ENCODE measurements at regions of chr14 and their contacts with region 1.

Region 1: GRCh38 chr14:55270832-55271565 is at the start of gene FBXO34:
- DNase-seq: peak; percentile 100
- H3K4me3 Mint-ChIP-seq: peak within 1 kb of the TSS; percentile 92
- H3K27ac Mint-ChIP-seq: peak within 1 kb of the TSS; percentile 90
- H3K4me1 Mint-ChIP-seq: peaks cover 40% of the 10 kb centered on the region
- H3K27me3 Mint-ChIP-seq: no peaks in the 10 kb centered on the region
- total RNA-seq, gene FBXO34: 25.1 to 25.5 TPM

Region 2: GRCh38 chr14:55043528-55043927 is 227.5 kb before region 1 on chr14:
- CTCF ChIA-PET with region 1: no interaction called
- POLR2A ChIA-PET with region 1: no interaction called
- DNase-seq: no peak
- H3K4me3 Mint-ChIP-seq: no peak overlapping the region
- H3K27ac Mint-ChIP-seq: no peak overlapping the region
- H3K4me1 Mint-ChIP-seq: no peaks in the 10 kb centered on the region
- H3K27me3 Mint-ChIP-seq: no peaks in the 10 kb centered on the region

Region 3: DNA sequence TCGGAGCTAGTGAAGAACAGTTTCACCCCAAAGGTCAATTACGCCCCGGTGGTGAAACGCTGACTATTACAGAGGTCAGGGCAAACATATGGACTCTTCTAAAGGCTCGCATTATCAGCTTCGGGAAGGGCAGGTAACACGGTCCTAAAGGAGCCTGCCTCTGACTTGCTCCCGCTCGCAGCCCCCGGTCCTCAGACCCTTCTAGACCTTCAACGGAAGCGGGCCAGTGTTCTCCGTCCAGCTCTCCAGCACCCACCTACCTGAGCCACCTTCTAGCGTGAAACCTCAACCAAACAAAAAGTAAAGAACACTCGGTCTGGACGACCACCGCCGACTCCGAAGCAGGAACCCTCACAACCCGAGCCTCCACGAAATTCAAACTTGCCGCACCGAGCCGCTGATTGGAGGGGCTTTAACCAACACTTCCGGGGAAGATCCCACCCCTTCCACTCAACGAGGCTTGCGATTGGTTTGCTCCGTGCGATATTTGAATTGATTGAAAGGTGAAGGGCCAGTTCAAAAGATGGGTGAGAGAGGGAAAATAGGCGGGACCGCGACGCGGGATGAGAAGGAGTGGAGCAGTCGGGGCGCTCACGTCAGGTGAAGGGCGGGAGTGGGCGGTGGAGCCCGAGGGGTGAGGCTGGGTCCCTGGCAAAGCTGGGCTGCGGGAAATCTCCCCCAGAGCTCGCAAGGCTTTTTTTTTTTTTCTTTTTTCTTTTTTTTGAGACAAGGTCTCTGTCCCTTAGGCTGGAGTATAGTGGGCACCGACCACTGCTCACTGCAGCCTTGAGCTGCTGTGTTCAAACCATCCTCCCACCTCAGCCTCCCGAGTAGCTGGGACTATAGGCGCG is 79.6 kb before region 1 on chr14 and contains the start of gene DLGAP5:
- CTCF ChIA-PET with region 1: interaction called, 13 read pairs
- POLR2A ChIA-PET with region 1: interaction called, 4 read pairs
- DNase-seq: peak; percentile 95
- H3K4me3 Mint-ChIP-seq: peak within 1 kb of the TSS; percentile 77
- H3K27ac Mint-ChIP-seq: peak within 1 kb of the TSS; percentile 83
- H3K4me1 Mint-ChIP-seq: peaks cover 39% of the 10 kb centered on the region
- H3K27me3 Mint-ChIP-seq: peaks cover 4% of the 10 kb centered on the region
- total RNA-seq, gene DLGAP5: 89.7 to 95.8 TPM

Region 4: GRCh38 chr14:55281316-55281839 is 10.4 kb after region 1 on chr14:
- CTCF ChIA-PET with region 1: interaction called, 10 read pairs
- POLR2A ChIA-PET with region 1: interaction called, 4 read pairs
- DNase-seq: no peak
- H3K4me3 Mint-ChIP-seq: no peak overlapping the region
- H3K27ac Mint-ChIP-seq: no peak overlapping the region
- H3K4me1 Mint-ChIP-seq: peaks cover 34% of the 10 kb centered on the region
- H3K27me3 Mint-ChIP-seq: no peaks in the 10 kb centered on the region

Region 5: GRCh38 chr14:55333711-55334485 is 62.9 kb after region 1 on chr14:
- CTCF ChIA-PET with region 1: interaction called, 35 read pairs
- POLR2A ChIA-PET with region 1: interaction called, 16 read pairs
- DNase-seq: no peak
- H3K4me3 Mint-ChIP-seq: peak overlapping the region; percentile 76
- H3K27ac Mint-ChIP-seq: peak overlapping the region; percentile 88
- H3K4me1 Mint-ChIP-seq: peaks cover 81% of the 10 kb centered on the region
- H3K27me3 Mint-ChIP-seq: no peaks in the 10 kb centered on the region

Region 6: DNA sequence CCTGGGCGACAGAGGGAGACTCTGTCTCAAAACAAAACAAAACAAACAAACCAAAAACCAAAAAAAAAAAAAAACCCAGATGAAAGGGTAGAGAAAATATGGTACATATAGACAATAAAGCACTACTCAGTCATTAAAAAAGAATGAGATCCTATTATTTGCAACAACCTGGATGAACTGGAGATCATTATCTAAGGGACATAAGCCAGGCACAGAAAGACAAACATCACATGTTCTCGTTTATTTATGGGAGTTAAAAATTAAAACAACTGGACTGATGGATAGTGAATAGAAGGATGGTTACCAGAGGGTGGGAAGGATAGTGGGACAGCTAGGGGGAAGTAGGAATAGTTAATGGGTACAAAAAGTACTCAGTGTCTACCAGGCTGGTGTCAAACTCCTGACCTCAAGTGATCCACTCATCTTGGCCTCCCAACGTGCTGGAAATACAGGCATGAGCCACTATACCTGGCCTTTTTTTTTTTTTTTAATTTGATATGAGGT is 252.3 kb after region 1 on chr14:
- CTCF ChIA-PET with region 1: no interaction called
- POLR2A ChIA-PET with region 1: no interaction called
- DNase-seq: no peak
- H3K4me3 Mint-ChIP-seq: no peak overlapping the region
- H3K27ac Mint-ChIP-seq: no peak overlapping the region
- H3K4me1 Mint-ChIP-seq: no peaks in the 10 kb centered on the region
- H3K27me3 Mint-ChIP-seq: peaks cover 5% of the 10 kb centered on the region

Measured in activated CD4-positive, alpha-beta memory T cell treated with anti-CD3 and anti-CD28 coated beads, Interleukin-2, amount 10 ng/mL, durations not matched to agents 7 days and 5 days (primary cell).